Ovary (tissue), 10 donors: ENCODE measurements at regions of chr1 and their contacts with region 1.

Region 1: GRCh38 chr1:147172168-147172992 is at the start of gene PRKAB2:
- DNase-seq: peak; percentile 94 to 98 (median 95)
- H3K4me3 ChIP-seq: peak within 1 kb of the TSS; percentile 98
- H3K27ac ChIP-seq: peak within 1 kb of the TSS; percentile 79 to 86
- H3K4me1 ChIP-seq: peaks cover 4% of the 10 kb centered on the region
- H3K27me3 ChIP-seq: no peaks in the 10 kb centered on the region
- CTCF ChIP-seq: peak; percentile 93 to 97 (median 96)
- EP300 ChIP-seq: no peak
- POLR2A ChIP-seq: peak; percentile 48
- total RNA-seq, gene PRKAB2: 10.0 to 15.8 (median 13.4) TPM

Region 2: GRCh38 chr1:147242439-147243227 is 70.3 kb after region 1 on chr1 and contains the start of gene CHD1L:
- intact Hi-C with region 1: loop called (anchors 1 to 10 kb)
- DNase-seq: peak; percentile 91 to 97 (median 95)
- H3K4me3 ChIP-seq: peak within 1 kb of the TSS; percentile 68
- H3K27ac ChIP-seq: peak within 1 kb of the TSS; percentile 85 to 88
- H3K4me1 ChIP-seq: peaks cover 1% of the 10 kb centered on the region
- H3K27me3 ChIP-seq: no peaks in the 10 kb centered on the region
- CTCF ChIP-seq: peak; percentile 76 to 94 (median 93)
- EP300 ChIP-seq: no peak
- POLR2A ChIP-seq: peak; percentile 31
- total RNA-seq, gene CHD1L: 12.2 to 30.9 (median 16.8) TPM